ENCODE measurements at regions of chr5 and their contacts with region 1.

Region 1: DNA sequence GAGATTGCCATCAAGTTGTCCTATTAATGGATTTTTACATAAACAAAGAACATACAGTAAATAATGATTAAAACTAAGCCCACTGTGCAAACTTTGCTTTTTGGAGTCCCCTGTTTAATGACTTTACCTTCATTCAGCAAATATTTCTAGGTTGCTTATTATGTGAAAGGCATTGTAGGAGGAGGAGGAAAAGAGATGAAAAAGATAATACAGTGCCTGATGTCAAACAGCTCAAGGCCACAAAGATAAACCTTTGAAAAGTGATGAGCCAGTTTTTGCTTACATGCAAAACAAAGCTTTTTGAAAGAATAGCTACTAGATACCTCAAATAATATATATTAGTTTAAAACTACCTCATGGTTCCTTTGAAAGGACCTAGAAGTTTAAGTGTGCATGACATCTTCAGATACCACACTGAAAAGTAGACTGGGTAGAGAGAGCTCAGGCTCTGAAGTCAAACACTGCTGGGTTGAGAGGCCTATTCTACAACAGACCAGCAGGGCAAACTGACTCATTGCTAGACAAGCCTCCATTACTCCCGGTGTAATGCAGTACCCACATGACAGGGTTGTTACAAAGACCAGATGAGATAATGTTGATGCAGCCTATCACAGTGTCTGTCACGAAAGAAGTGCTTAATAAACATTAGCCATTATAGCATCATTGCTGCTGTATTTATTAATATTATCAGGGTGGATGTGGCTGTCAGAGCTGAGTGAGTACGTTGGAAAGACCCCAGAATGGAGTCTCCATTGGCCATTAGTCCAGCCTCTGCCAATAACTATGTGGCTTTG is 11.8 kb downstream of the DEPDC1B start:
- DNase-seq: peak in 3 of 4 experiments; percentile 19 to 67 (median 47)
- ATAC-seq: peak; percentile 99
- H3K4me3 ChIP-seq: no peak overlapping the region
- H3K27ac ChIP-seq: 0 out of 3 replicates have a peak overlapping the region, but pooled peaks have one; percentile 13
- H3K4me1 ChIP-seq: peaks cover 0 to 21% of the 10 kb centered on the region in 2 experiments; a peak in 3 of 5 replicates
- H3K27me3 ChIP-seq: no peaks in the 10 kb centered on the region
- CTCF ChIP-seq: peak; percentile 42 to 64 (median 55)
- EP300 ChIP-seq: no peak
- POLR2A ChIP-seq: no peak
- RAD21 ChIP-seq: no peak; a peak in 1 of 4 replicates

Region 2: DNA sequence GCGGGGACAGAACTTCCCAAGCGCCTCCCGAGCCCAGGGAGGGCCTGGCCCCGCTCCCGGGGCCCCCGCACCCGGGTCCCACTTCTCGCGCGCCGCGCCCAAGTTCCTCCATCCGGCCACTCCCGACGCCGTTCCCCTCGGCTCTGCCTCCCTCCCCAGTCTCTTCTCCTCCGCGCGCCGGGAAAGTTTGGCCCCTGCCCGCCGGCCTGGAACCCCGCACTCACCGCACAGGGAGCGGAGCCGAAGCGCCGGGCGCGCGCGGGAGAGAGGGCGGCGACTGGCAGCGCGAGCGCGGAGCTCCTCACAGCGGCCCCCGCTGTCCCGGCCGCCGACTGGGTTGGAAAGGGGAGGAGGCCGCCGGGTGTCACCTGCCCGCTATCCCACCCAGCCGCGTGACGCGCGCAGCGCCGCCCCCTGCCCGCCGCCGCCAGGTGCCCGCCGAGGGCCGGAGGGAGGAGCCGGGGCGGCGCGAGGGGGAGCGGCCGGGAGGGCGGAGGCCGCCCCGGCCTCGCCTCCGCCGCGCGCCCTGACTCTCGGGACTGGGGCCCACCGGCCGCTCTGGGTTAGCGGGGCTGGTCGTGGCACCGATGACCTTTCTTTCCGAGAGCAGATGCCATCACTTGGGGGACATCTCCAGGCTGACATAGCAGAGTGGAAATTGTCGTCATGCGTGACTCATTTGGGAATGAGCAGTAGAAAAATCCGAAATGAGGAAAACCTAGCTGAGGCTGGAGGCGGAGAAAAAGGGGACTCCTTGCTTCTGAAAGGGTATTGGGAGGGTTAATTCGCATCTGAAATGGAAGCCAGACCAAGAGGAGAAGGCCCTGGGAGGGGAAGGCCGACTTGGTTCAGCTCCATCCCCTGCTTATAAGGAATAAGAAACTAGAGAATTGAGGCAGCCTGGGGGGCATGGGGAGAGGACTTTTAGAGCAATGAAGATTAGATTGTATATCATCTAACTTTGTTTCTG is 156.1 kb after region 1 on chr5 and contains the start of gene ELOVL7:
- CTCF ChIA-PET with region 1: no interaction called
- POLR2A ChIA-PET with region 1: no interaction called
- in situ Hi-C with region 1: no loop called
- intact Hi-C with region 1: loop called (anchors 5 kb)
- DNase-seq: peak; percentile 77 to 87 (median 82)
- ATAC-seq: peak; percentile 97
- H3K4me3 ChIP-seq: peak within 1 kb of the TSS; percentile 68
- H3K27ac ChIP-seq: peak within 1 kb of the TSS; percentile 44; the same call in 2 of the 3 replicates
- H3K4me1 ChIP-seq: peaks cover 5 to 14% of the 10 kb centered on the region in 2 experiments; a peak in 4 of 5 replicates
- H3K27me3 ChIP-seq: peaks cover 0 to 14% of the 10 kb centered on the region in 2 experiments; a peak in 3 of 5 replicates
- CTCF ChIP-seq: peak; percentile 28 to 69 (median 59); a peak in 4 of 6 replicates
- EP300 ChIP-seq: no peak
- POLR2A ChIP-seq: peak; percentile 48; the same call in 1 of the 2 replicates
- RAD21 ChIP-seq: peak; percentile 36 to 48; a peak in 3 of 4 replicates
- polyA plus RNA-seq, gene ELOVL7: 4.6 to 5.6 TPM